ENCODE measurements at regions of chr17 and their contacts with region 1.

Region 1: GRCh38 chr17:48513097-48513496 is 17.7 kb downstream of the HOXB1 start:
- DNase-seq: no peak
- ATAC-seq: no peak
- H3K4me3 Mint-ChIP-seq: peak overlapping the region; percentile 69
- H3K27ac Mint-ChIP-seq: no peak overlapping the region
- H3K4me1 Mint-ChIP-seq: peaks cover 24% of the 10 kb centered on the region
- H3K27me3 Mint-ChIP-seq: peaks cover 15% of the 10 kb centered on the region
- CTCF ChIP-seq: no peak

Region 2: GRCh38 chr17:48543107-48543853 is 30.2 kb after region 1 on chr17:
- CTCF ChIA-PET with region 1: no interaction called
- POLR2A ChIA-PET with region 1: no interaction called
- intact Hi-C with region 1: loop called (anchors 2 kb)
- DNase-seq: peak; percentile 63
- ATAC-seq: peak; percentile 59
- H3K4me3 Mint-ChIP-seq: peak overlapping the region; percentile 89
- H3K27ac Mint-ChIP-seq: peak overlapping the region; percentile 82
- H3K4me1 Mint-ChIP-seq: peaks cover 38% of the 10 kb centered on the region
- H3K27me3 Mint-ChIP-seq: peaks cover 35% of the 10 kb centered on the region
- CTCF ChIP-seq: no peak

Measured in activated B cell treated with CpG ODN at 0.5 μM for 24 hours (primary cell).